Calu3 (cell line): ENCODE measurements at regions of chr6 and their contacts with region 1.

Region 1: DNA sequence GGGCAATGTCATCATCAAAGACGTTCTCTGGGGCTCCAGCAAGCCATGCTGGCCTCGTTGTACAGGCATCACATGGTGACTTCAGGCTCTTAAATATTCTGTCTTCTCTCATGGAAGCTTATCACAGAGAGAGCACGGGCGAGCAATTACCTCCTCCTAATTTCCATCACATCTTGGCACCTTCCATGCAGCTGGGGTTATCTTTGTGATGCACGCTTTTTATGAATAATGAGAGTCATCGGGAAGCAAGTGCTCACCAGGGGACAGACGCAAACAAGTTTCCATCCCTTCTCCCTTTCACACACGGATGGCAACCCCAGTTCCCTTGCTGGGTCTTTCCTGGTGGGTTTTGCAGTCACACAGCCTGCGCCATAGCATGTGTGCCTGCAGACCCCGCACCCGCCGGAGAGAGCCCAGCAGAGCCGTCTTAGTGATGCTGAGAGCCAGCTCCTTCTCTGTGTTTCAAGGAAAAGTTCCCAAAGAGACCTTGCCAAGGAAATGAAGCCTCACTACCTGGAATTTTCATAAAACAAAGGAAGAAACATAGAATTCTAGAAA is 116.3 kb upstream of the AFDN start:
- DNase-seq: no peak
- H3K4me3 Mint-ChIP-seq: no peak overlapping the region
- H3K27ac Mint-ChIP-seq: no peak overlapping the region
- H3K4me1 Mint-ChIP-seq: no peaks in the 10 kb centered on the region
- H3K27me3 Mint-ChIP-seq: peaks cover 76% of the 10 kb centered on the region
- CTCF ChIP-seq: no peak

Region 2: GRCh38 chr6:167652701-167653095 is 57.7 kb before region 1 on chr6:
- CTCF ChIA-PET with region 1: no interaction called
- intact Hi-C with region 1: no loop called
- DNase-seq: no peak
- H3K4me3 Mint-ChIP-seq: no peak overlapping the region
- H3K27ac Mint-ChIP-seq: no peak overlapping the region
- H3K4me1 Mint-ChIP-seq: peaks cover 1% of the 10 kb centered on the region
- H3K27me3 Mint-ChIP-seq: no peaks in the 10 kb centered on the region
- CTCF ChIP-seq: no peak

Region 3: DNA sequence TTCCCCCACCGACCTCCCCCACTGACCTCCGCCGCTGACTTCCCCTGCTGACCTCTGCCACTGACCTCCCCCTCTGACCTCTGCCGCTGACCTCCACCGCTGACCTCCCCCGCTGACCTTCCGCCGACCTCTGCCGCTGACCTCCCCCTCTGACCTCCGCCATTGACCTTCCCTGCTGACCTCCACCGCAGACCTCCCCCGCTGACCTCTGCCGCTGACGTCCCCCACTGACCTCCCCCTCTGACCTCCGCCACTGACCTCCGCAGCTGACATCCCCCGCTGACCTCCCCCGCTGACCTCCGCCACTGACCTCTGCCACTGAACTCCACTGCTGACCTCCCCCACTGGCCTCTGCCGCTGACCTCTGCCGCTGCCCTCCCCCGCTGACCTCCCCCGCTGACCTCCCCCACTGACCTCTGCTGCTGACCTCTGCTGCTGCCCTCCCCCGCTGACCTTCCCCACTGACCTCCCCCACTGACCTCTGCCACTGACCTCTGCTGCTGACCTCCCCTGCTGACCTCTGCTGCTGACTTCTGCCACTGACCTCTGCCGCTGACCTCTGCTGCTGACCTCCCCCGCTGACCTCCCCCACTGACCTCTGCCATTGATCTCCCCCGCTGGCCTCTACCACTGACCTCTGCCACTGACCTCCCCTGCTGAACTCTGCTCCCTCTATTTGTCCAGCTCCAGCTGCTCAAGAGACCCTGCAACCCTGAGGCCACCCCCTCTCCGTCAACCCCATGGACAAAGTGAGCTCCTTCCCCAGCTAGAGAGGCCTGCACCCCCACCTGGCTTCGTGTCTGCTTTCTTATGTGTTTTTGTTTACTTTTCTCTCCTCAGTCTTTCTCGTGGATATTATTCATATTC is 24.9 kb after region 1 on chr6:
- CTCF ChIA-PET with region 1: interaction called, 11 read pairs
- intact Hi-C with region 1: no loop called
- DNase-seq: no peak
- H3K4me3 Mint-ChIP-seq: no peak overlapping the region
- H3K27ac Mint-ChIP-seq: no peak overlapping the region
- H3K4me1 Mint-ChIP-seq: peaks cover 18% of the 10 kb centered on the region
- H3K27me3 Mint-ChIP-seq: peaks cover 44% of the 10 kb centered on the region
- CTCF ChIP-seq: no peak